Right ventricle myocardium superior (tissue), 1 donor: ENCODE measurements at regions of chr17 and their contacts with region 1.

Region 1: DNA sequence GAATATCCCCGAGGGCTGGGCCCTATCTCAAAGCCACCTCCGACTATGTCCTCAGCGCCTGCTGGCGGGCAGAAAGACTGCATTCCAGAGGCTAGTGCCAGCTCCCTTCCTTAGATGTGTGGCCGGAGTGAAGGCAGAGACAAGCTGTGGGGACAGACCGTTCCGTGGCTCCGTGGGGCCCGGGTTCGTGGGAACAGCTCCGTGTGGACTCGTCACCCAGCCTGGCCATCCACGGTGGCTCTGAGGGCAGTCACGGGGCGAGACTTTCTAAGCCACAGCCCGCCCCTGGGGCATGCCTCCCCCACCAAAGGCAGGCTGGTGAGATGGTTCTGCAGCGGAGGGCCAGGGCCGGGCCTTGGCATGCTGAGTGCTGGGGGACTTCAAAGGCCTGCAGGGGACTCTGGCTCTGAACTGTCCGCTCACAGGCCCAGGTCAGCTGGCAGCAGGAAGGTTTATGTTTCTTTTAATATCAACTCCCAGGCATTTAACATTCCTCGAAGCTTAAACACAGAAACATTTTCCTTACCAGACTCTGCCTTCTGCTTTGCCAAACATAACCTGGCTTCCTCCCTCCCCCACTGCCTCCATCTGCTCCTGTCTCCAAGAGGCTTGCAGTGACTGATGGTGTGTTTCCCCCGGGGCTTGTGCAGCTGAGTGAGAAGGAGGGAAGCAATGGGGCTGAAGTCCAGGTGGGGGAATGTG is 50.4 kb downstream of the TIMM22 start:
- DNase-seq: peak; percentile 76
- ATAC-seq: peak; percentile 83

Region 2: GRCh38 chr17:1002771-1003555 is 44.4 kb before region 1 on chr17:
- intact Hi-C with region 1: loop called (anchors 5 kb)
- DNase-seq: peak; percentile 63
- ATAC-seq: peak; percentile 10